Mammary epithelial cell (primary cell): ENCODE measurements at regions of chr9 and their contacts with region 1.

Region 1: GRCh38 chr9:76893395-76893932 is 12.4 kb downstream of the PRUNE2 start:
- DNase-seq: no peak
- H3K4me3 ChIP-seq: no peak overlapping the region
- H3K27ac ChIP-seq: no peak overlapping the region
- H3K4me1 ChIP-seq: no peaks in the 10 kb centered on the region
- H3K27me3 ChIP-seq: peaks cover 7% of the 10 kb centered on the region
- CTCF ChIP-seq: no peak

Region 2: DNA sequence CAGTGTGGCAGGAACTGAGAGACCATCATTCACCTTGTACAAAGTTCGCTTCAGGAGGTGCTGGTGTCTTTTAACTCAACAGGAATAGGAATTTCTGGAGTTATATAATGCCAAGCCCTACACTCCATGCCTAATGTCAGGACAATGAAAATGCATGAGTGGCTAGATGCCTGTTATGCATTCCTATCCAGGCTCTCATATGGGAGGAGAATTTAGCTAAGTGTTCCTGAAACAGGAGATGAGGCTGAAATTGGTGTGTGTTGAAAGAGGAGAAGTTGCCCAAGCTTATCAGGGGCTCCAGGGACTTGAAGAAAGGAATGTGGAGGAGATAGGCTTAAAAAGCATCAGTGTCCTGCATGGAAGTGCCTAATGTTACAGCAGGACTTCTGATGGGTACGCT is 39.3 kb after region 1 on chr9:
- CTCF ChIA-PET with region 1: no interaction called
- dilution Hi-C with region 1: loop called (anchors 5 kb)
- in situ Hi-C with region 1: no loop called
- intact Hi-C with region 1: no loop called
- DNase-seq: no peak
- H3K4me3 ChIP-seq: no peak overlapping the region
- H3K27ac ChIP-seq: no peak overlapping the region
- H3K4me1 ChIP-seq: no peaks in the 10 kb centered on the region
- H3K27me3 ChIP-seq: no peaks in the 10 kb centered on the region
- CTCF ChIP-seq: no peak